Caco-2 (cell line): ENCODE measurements at regions of chr7 and their contacts with region 1.

Region 1: GRCh38 chr7:37234928-37235327 is 213.7 kb downstream of the ELMO1 start:
- DNase-seq: peak in 1 of 2 experiments; percentile 22
- H3K4me3 ChIP-seq: no peak overlapping the region
- H3K4me3 Mint-ChIP-seq: no peak overlapping the region
- H3K27ac Mint-ChIP-seq: no peak overlapping the region
- H3K4me1 ChIP-seq: no peaks in the 10 kb centered on the region
- H3K4me1 Mint-ChIP-seq: no peaks in the 10 kb centered on the region
- H3K27me3 ChIP-seq: no peaks in the 10 kb centered on the region
- H3K27me3 Mint-ChIP-seq: peaks cover 18% of the 10 kb centered on the region
- CTCF ChIP-seq: peak; percentile 30 to 58

Region 2: DNA sequence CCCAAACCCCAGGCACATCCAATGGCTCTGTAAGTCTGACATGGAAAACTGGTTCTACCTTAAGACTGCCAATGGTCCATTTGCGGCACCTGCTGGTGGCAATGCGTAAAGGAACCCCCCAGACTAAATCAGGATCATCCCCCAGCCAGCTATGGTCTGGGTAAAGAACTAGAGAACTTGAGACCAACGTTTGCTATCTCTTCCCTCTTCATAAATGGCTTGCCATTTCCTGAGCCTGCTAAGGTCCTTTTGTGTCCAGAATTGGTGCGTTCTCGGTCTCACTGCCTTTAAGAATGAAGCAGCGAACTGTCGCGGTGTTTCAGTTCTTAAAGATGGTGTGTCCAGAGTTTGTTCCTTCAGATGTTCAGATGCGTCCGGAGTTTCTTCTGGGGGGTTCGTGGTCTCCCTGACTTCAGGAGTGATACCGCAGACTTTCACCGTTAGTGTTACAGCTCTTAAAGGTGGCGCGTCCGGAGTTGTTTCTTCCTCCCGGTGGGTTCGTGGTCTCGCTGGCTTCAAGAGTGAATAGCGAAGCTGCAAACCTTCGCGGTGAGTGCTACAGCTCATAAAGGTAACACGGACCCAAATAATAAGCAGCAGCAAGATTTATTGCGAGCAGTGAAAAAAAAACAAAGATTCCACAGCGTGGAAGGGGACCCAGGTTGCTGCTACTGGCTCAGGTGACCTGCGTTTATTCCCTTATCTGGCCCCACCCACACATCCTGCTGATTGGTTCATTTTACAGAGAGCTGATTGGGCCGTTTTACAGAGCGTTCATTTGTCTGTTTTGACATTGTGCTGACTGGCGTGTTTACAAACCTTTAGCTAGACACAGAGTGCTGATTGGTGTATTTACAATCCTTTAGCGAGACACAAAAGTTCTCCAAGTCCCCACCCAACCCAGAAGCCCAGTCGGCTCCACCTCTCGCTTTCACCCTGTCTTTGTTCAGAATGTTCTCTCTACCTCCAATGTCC is 118.3 kb after region 1 on chr7:
- CTCF ChIA-PET with region 1: no interaction called
- POLR2A ChIA-PET with region 1: no interaction called
- intact Hi-C with region 1: loop called (anchors 1 kb)
- DNase-seq: peak; percentile 42 to 45
- H3K4me3 ChIP-seq: no peak overlapping the region
- H3K4me3 Mint-ChIP-seq: no peak overlapping the region
- H3K27ac Mint-ChIP-seq: no peak overlapping the region
- H3K4me1 ChIP-seq: no peaks in the 10 kb centered on the region
- H3K4me1 Mint-ChIP-seq: no peaks in the 10 kb centered on the region
- H3K27me3 ChIP-seq: no peaks in the 10 kb centered on the region
- H3K27me3 Mint-ChIP-seq: peaks cover 4% of the 10 kb centered on the region
- CTCF ChIP-seq: peak; percentile 51 to 55

Region 3: GRCh38 chr7:37495574-37496184 is 260.8 kb after region 1 on chr7:
- CTCF ChIA-PET with region 1: no interaction called
- POLR2A ChIA-PET with region 1: no interaction called
- intact Hi-C with region 1: loop called (anchors 1 kb)
- DNase-seq: peak in 1 of 2 experiments; percentile 13
- H3K4me3 ChIP-seq: no peak overlapping the region
- H3K4me3 Mint-ChIP-seq: no peak overlapping the region
- H3K27ac Mint-ChIP-seq: no peak overlapping the region
- H3K4me1 ChIP-seq: no peaks in the 10 kb centered on the region
- H3K4me1 Mint-ChIP-seq: no peaks in the 10 kb centered on the region
- H3K27me3 ChIP-seq: no peaks in the 10 kb centered on the region
- H3K27me3 Mint-ChIP-seq: peaks cover 3% of the 10 kb centered on the region
- CTCF ChIP-seq: peak in 1 of 2 experiments; percentile 69

Region 4: GRCh38 chr7:37510043-37510634 is 275.2 kb after region 1 on chr7:
- CTCF ChIA-PET with region 1: interaction called, 4 read pairs
- POLR2A ChIA-PET with region 1: no interaction called
- intact Hi-C with region 1: loop called (anchors 1 kb)
- DNase-seq: peak in 1 of 2 experiments; percentile 15
- H3K4me3 ChIP-seq: no peak overlapping the region
- H3K4me3 Mint-ChIP-seq: no peak overlapping the region
- H3K27ac Mint-ChIP-seq: no peak overlapping the region
- H3K4me1 ChIP-seq: no peaks in the 10 kb centered on the region
- H3K4me1 Mint-ChIP-seq: no peaks in the 10 kb centered on the region
- H3K27me3 ChIP-seq: no peaks in the 10 kb centered on the region
- H3K27me3 Mint-ChIP-seq: peaks cover 6% of the 10 kb centered on the region
- CTCF ChIP-seq: peak; percentile 45 to 72

Region 5: DNA sequence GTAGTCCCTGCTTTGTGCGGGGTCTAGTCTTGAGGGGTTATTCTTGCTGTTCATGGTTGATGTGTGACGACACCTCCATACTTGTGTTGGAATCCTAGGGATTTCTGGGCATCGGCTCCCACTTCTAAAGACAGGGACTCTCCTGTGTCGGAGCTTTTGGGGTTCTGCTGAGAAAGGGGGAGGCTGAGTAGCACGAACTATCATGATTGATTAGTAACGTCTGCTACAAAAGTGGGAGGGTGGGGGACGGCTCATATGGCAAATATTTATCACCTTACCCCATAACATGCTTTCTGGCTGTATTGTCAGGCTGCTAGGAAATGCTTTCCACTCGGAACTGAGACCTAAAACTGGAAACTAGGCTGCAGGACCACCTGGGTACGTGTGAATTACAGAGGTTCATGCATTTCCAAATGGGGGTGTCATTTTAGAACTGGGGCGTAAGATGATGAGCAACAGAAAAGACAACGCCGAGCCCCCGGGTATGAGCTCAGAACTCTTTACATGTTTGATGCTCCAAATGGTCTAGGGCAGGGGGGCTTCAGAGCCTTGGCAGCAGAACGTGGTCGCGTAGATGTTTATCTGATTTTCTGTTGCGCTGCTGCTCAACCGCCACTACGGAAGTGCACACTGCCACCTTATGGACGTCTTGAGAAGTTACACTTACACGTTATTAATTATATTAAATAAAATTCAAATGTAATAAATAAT is 598.3 kb after region 1 on chr7:
- CTCF ChIA-PET with region 1: no interaction called
- POLR2A ChIA-PET with region 1: no interaction called
- intact Hi-C with region 1: loop called (anchors 5 kb)
- DNase-seq: peak; percentile 32 to 41
- H3K4me3 ChIP-seq: no peak overlapping the region
- H3K4me3 Mint-ChIP-seq: no peak overlapping the region
- H3K27ac Mint-ChIP-seq: no peak overlapping the region
- H3K4me1 ChIP-seq: no peaks in the 10 kb centered on the region
- H3K4me1 Mint-ChIP-seq: no peaks in the 10 kb centered on the region
- H3K27me3 ChIP-seq: no peaks in the 10 kb centered on the region
- H3K27me3 Mint-ChIP-seq: peaks cover 3% of the 10 kb centered on the region
- CTCF ChIP-seq: peak; percentile 53 to 68

Region 6: GRCh38 chr7:37853474-37853873 is 618.5 kb after region 1 on chr7:
- CTCF ChIA-PET with region 1: no interaction called
- POLR2A ChIA-PET with region 1: no interaction called
- intact Hi-C with region 1: loop called (anchors 1 kb)
- DNase-seq: peak in 1 of 2 experiments; percentile 25
- H3K4me3 ChIP-seq: no peak overlapping the region
- H3K4me3 Mint-ChIP-seq: no peak overlapping the region
- H3K27ac Mint-ChIP-seq: no peak overlapping the region
- H3K4me1 ChIP-seq: no peaks in the 10 kb centered on the region
- H3K4me1 Mint-ChIP-seq: no peaks in the 10 kb centered on the region
- H3K27me3 ChIP-seq: no peaks in the 10 kb centered on the region
- H3K27me3 Mint-ChIP-seq: peaks cover 6% of the 10 kb centered on the region
- CTCF ChIP-seq: peak; percentile 50 to 67